Activated T-helper 2 cell treated with anti-CD3 and anti-CD28 coated beads, Interferon-gamma antibody, Interleukin-2, Interleukin-4, amounts not matched to agents 10 μg/mL and 5 μg/mL and 100 μg/mL, durations not matched to agents 14 hours and 24 hours and 36 hours (primary cell): ENCODE measurements at regions of chr3 and their contacts with region 1.

Region 1: DNA sequence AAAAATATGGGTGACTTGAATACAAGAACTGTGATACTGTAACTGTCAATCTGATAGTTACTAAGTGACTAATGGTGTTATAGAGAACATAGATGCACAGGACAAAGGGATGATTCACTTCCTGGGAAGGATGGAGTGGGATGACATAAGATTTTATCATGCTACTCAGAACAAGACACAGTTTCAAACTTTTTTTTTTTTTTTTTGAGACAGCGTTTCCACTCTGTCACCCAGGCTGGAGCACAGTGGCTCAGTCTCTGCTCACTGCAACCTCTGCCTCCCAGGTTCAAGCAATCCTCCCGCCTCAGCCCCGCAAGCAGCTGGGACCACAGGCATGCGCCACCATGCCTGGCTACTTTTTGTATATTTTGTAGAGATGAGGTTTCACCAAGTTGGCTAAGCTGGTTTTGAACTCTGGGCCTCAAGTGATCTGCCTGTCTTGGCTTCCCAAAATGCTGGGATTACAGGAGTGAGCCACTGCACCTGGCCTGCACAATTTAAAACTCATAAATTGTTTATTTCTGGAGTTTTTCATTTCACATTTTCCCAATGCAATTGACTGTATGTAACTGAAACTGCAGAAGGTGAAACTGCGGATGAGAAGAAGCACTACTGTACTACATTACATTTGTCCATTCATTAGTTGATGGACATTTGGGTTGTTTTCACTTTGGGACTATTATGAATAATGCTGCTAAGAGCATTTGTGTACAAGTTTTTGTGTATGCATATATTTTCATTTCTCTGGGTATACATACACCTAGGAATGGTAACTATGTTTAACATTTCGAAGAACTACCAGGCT is 40.6 kb downstream of the ADIPOQ start:
- DNase-seq: peak; percentile 47
- H3K4me3 Mint-ChIP-seq: peak overlapping the region; percentile 52
- H3K27ac Mint-ChIP-seq: peak overlapping the region; percentile 87
- H3K4me1 Mint-ChIP-seq: peaks cover 57% of the 10 kb centered on the region
- H3K27me3 Mint-ChIP-seq: no peaks in the 10 kb centered on the region

Region 2: DNA sequence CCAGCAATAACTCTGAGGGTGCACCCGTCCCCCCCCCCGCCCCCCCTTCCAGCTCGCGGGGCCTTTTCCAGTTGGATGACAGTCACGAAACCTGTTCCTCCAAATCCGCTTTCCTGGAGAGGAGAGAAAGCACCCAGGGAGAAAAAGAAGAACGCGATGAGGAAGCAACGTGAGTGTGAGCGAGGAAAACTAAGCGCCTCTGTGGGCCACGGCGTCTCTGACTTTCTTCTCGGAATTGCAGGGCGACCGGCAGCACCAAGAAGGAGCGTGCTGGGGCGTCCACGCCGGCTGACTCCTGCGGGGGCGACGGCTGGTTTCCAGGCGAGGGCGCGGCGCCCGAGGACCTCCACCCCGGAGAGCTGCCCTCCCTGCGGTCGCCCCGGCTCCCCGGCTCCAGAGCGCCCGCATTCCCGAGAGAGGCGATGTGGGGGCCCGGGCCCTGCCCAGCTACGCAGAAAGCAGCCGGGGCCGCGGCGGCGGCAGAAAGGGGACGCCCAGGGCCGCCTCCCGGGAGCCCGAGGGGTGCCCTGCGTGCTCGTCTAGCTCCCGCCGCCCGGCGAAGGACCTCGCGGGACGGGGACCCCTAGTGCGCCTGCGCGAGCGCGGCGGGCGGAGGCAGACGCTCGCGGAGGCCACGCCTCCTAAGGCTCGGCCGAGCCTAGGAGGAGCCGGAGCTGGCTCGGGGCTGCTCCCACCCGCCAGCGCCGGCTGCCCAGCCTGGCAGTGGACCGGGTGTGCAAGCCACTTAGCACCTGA is 55.9 kb before region 1 on chr3:
- intact Hi-C with region 1: loop called (anchors 2 kb)
- DNase-seq: peak; percentile 84
- H3K4me3 Mint-ChIP-seq: peak overlapping the region; percentile 91
- H3K27ac Mint-ChIP-seq: peak overlapping the region; percentile 65
- H3K4me1 Mint-ChIP-seq: peaks cover 21% of the 10 kb centered on the region
- H3K27me3 Mint-ChIP-seq: peaks cover 39% of the 10 kb centered on the region

Region 3: GRCh38 chr3:186871403-186871924 is 11.6 kb before region 1 on chr3:
- intact Hi-C with region 1: no loop called
- DNase-seq: no peak
- H3K4me3 Mint-ChIP-seq: no peak overlapping the region
- H3K27ac Mint-ChIP-seq: peak overlapping the region; percentile 53
- H3K4me1 Mint-ChIP-seq: peaks cover 31% of the 10 kb centered on the region
- H3K27me3 Mint-ChIP-seq: no peaks in the 10 kb centered on the region

Region 4: GRCh38 chr3:186909078-186909853 is 26.2 kb after region 1 on chr3:
- intact Hi-C with region 1: loop called (anchors 1 kb)
- DNase-seq: peak; percentile 78
- H3K4me3 Mint-ChIP-seq: peak overlapping the region; percentile 26
- H3K27ac Mint-ChIP-seq: peak overlapping the region; percentile 83
- H3K4me1 Mint-ChIP-seq: peaks cover 24% of the 10 kb centered on the region
- H3K27me3 Mint-ChIP-seq: no peaks in the 10 kb centered on the region

Region 5: DNA sequence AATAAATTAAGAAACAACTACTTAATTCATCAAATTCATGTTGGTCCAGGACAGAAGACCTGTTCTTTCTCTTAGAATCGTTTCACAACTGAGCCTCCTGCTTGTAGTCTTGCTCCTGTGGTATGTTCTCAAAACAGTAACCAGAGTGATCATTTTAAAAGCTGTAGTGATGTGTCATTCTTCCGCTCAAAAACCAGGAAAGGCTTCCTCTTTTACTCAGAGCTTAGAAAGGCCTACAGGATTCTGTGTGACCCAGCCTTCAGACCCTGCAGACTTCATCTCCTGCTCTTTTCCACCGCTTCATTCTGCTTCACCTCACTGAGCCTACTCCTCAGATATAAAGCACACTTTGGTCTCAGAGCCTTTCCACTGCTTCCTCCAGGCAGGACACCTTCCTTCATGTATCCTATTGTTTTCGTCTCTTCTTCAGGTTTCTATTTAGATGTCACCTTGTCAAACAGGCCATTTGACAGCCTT is 70.0 kb after region 1 on chr3:
- intact Hi-C with region 1: loop called (anchors 1 kb)
- DNase-seq: no peak
- H3K4me3 Mint-ChIP-seq: peak overlapping the region; percentile 27
- H3K27ac Mint-ChIP-seq: peak overlapping the region; percentile 74
- H3K4me1 Mint-ChIP-seq: peaks cover 66% of the 10 kb centered on the region
- H3K27me3 Mint-ChIP-seq: no peaks in the 10 kb centered on the region

Region 6: GRCh38 chr3:187025656-187026316 is 142.7 kb after region 1 on chr3:
- intact Hi-C with region 1: loop called (anchors 1 kb)
- DNase-seq: no peak
- H3K4me3 Mint-ChIP-seq: peak overlapping the region; percentile 77
- H3K27ac Mint-ChIP-seq: peak overlapping the region; percentile 89
- H3K4me1 Mint-ChIP-seq: peaks cover 51% of the 10 kb centered on the region
- H3K27me3 Mint-ChIP-seq: no peaks in the 10 kb centered on the region

Region 7: DNA sequence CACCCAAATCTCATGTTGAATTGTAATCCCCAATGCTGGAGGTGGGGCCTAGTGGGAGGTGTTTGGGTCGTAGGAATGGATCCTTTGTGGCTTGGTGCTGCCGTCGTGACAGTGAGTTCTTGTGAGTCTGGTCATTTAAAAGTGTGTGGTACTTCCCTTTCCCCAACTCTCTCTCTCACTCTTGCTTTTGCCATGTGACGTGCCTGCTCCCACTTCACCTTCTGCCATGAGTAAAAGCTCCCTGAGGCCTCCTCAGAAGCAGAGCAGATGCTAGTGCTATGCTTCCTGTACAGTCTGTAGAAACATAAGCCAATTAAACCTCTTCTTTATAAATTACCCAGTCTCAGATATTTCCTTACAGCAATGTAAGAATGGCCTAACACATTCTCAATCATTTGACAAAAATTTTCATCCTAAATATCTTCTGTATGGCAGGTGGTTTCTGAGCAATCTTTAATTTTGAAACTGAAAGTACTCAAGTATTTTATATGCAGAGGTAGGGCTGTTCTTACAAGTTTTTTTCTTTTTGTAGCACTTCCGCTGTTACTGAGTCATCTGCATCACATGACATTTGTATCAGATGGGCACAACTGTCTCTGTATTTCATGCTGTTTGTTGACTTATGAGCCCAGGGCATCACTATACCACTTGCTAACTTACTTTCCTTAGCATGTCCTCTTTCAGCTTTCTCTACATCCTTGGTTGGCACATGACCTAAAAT is 247.4 kb after region 1 on chr3:
- intact Hi-C with region 1: loop called (anchors 2 kb)
- DNase-seq: peak; percentile 40
- H3K4me3 Mint-ChIP-seq: peak overlapping the region; percentile 65
- H3K27ac Mint-ChIP-seq: peak overlapping the region; percentile 98
- H3K4me1 Mint-ChIP-seq: peaks cover 49% of the 10 kb centered on the region
- H3K27me3 Mint-ChIP-seq: no peaks in the 10 kb centered on the region